ENCODE measurements at regions of chr11 and their contacts with region 1.

Region 1: DNA sequence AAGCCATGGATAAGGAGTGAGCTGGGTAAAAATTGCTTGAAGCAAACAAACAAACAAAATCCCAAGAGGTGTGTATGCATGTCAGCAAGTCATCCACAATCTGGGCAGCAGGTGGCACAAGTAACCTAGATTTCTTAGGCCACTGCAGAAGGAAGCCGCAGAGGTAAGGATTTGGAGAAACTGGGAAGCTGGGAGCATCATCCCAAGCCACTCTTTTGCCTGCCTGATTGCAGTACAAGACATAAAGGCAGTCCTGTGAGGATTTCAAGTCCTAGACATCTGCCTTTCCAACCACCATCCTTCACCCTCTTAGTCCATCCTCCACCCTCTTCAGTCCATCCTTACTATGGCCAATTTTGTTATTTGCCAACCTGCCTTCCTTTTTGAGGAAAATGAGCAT is 67.2 kb upstream of the BMAL1 start:
- DNase-seq: no peak
- H3K4me3 Mint-ChIP-seq: no peak overlapping the region
- H3K27ac Mint-ChIP-seq: no peak overlapping the region
- H3K4me1 Mint-ChIP-seq: peaks cover 25% of the 10 kb centered on the region
- H3K27me3 Mint-ChIP-seq: no peaks in the 10 kb centered on the region

Region 2: GRCh38 chr11:12303421-12304149 is 906.8 kb before region 1 on chr11:
- intact Hi-C with region 1: no loop called
- DNase-seq: no peak
- H3K4me3 Mint-ChIP-seq: no peak overlapping the region
- H3K27ac Mint-ChIP-seq: peak overlapping the region; percentile 57
- H3K4me1 Mint-ChIP-seq: no peaks in the 10 kb centered on the region
- H3K27me3 Mint-ChIP-seq: no peaks in the 10 kb centered on the region

Region 3: GRCh38 chr11:13076966-13077365 is 133.5 kb before region 1 on chr11:
- intact Hi-C with region 1: no loop called
- DNase-seq: no peak
- H3K4me3 Mint-ChIP-seq: no peak overlapping the region
- H3K27ac Mint-ChIP-seq: no peak overlapping the region
- H3K4me1 Mint-ChIP-seq: no peaks in the 10 kb centered on the region
- H3K27me3 Mint-ChIP-seq: peaks cover 9% of the 10 kb centered on the region

Region 4: DNA sequence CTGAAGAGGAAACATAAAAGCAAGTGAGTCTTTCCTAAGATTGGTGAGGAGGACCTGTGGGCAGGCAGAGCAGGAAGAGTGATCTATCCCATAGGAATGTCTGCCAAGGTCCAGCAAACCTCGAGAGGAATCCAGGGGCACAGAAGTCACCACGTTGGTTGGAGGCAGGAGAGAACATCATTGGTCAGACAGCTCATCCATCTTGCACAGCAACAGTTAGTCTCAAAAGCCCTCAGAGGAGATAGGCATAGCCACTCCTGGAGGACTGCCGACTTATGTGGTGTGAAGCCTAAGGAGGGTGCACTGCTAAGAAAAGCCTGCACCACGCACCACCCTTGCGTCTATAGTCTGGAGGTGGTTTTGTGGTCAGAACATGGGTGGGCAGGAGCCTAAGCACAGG is 92.2 kb before region 1 on chr11:
- intact Hi-C with region 1: no loop called
- DNase-seq: no peak
- H3K4me3 Mint-ChIP-seq: no peak overlapping the region
- H3K27ac Mint-ChIP-seq: no peak overlapping the region
- H3K4me1 Mint-ChIP-seq: no peaks in the 10 kb centered on the region
- H3K27me3 Mint-ChIP-seq: peaks cover 4% of the 10 kb centered on the region

Region 5: GRCh38 chr11:13183094-13183825 is 27.2 kb before region 1 on chr11:
- intact Hi-C with region 1: loop called (anchors 1 kb)
- DNase-seq: no peak
- H3K4me3 Mint-ChIP-seq: no peak overlapping the region
- H3K27ac Mint-ChIP-seq: no peak overlapping the region
- H3K4me1 Mint-ChIP-seq: peaks cover 9% of the 10 kb centered on the region
- H3K27me3 Mint-ChIP-seq: peaks cover 9% of the 10 kb centered on the region

Region 6: GRCh38 chr11:13276832-13277767 is 66.7 kb after region 1 on chr11:
- intact Hi-C with region 1: loop called (anchors 1 kb)
- DNase-seq: peak; percentile 98
- H3K4me3 Mint-ChIP-seq: peak overlapping the region; percentile 98
- H3K27ac Mint-ChIP-seq: peak overlapping the region; percentile 80
- H3K4me1 Mint-ChIP-seq: peaks cover 52% of the 10 kb centered on the region
- H3K27me3 Mint-ChIP-seq: peaks cover 46% of the 10 kb centered on the region

Region 7: DNA sequence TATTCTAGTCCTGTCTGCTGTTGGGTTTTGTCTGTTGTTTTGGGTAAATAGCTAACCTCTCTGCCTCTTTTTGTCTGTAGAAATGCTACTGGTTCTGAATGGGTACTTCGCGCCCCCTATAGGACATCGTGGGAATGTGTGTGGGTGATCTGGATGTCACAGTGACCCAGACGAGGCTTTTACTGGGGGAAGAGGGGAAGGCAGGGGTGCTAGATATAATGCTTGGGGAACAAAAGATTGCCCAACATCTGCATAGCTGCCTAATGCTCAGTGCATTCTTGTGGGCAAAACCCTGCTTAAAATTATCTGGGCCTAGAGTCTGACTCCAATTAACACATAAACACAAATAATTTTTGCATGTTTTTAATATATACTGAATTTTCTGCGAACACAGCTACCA is 124.9 kb after region 1 on chr11:
- intact Hi-C with region 1: loop called (anchors 1 kb)
- DNase-seq: peak; percentile 58
- H3K4me3 Mint-ChIP-seq: no peak overlapping the region
- H3K27ac Mint-ChIP-seq: peak overlapping the region; percentile 25
- H3K4me1 Mint-ChIP-seq: peaks cover 56% of the 10 kb centered on the region
- H3K27me3 Mint-ChIP-seq: no peaks in the 10 kb centered on the region

Region 8: DNA sequence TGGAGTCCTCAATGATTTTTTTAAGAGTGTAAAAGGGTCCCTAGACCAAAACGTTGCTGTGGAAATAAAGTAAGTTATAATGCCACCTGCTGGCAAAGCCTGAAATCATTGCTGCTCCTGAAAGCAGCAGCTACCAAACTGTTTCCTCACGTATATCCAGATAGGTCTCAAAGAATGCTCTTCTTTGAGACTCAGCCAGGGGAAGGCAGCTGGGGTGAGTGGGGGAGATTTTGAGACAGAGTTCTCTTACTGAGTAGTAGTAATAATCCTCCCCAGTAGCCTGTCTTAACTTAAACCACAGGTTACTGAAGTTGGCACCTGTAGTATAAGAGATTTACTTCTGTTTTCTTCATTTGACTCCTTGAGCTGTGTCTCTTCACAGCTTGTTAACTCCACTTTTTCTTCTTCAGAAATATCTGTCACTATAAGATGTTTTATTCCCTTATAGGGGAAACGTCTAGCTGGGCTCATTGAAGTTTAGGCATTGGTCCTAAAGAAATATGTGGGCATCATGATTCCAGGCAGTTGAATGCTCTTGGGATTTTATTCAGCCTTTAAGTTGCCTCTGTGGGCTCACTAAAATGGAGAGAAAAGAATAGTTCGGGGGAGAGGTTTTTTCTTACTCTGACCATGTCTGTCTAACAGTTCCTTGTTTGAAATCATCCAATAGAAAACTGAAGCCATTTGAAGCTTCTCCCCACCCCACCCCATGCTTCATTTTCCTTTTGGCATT is 174.7 kb after region 1 on chr11:
- intact Hi-C with region 1: loop called (anchors 2 kb)
- DNase-seq: no peak
- H3K4me3 Mint-ChIP-seq: no peak overlapping the region
- H3K27ac Mint-ChIP-seq: no peak overlapping the region
- H3K4me1 Mint-ChIP-seq: no peaks in the 10 kb centered on the region
- H3K27me3 Mint-ChIP-seq: no peaks in the 10 kb centered on the region

Region 9: GRCh38 chr11:13440100-13440855 is 229.9 kb after region 1 on chr11:
- intact Hi-C with region 1: no loop called
- DNase-seq: no peak
- H3K4me3 Mint-ChIP-seq: no peak overlapping the region
- H3K27ac Mint-ChIP-seq: no peak overlapping the region
- H3K4me1 Mint-ChIP-seq: no peaks in the 10 kb centered on the region
- H3K27me3 Mint-ChIP-seq: no peaks in the 10 kb centered on the region

Region 10: DNA sequence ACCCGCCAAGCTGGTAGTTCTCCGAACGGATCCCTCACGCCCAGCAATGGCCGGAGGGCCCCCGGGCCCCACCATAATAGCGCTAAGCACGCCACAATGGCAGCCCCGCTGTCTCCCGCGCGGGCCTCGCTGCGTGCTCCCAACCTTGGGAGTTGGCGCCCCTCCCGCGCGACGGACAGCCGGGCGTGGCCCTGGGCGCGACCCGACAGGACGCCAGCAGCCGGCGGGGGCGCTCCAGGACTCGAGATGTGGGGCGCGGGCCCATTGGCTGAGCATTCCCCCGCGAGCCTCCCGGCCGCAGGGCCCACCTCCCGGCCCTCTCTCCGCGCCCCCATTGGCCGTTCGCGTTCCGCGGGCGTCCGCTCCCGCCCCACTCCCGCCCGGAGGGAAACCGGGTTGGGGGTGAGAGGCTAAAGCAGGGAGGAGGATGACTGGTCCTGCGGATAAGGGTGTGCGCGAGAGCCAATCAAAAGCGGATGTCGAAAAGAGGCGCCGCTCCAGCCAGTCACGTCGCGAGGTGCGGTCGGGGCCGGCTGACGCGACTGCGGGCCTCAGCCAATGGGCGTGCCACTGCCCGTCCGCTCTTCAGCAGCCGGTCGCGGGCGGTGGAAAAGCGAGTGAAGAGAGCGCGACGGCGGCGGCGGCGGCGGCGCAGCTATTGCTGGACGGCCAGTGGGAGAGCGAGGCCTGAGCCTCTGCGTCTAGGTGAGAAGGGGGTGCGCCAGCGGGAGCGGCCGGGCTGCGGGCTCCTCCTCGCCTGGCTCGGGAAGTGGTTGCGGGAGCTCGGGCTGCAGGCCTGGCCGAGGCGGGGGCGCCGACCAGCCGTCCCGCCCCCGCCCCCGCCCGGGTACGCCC is 457.9 kb after region 1 on chr11 and contains the start of gene FAR1:
- intact Hi-C with region 1: loop called (anchors 1 kb)
- DNase-seq: peak; percentile 97
- H3K4me3 Mint-ChIP-seq: peak within 1 kb of the TSS; percentile 98
- H3K27ac Mint-ChIP-seq: peak within 1 kb of the TSS; percentile 99
- H3K4me1 Mint-ChIP-seq: peaks cover 42% of the 10 kb centered on the region
- H3K27me3 Mint-ChIP-seq: peaks cover 17% of the 10 kb centered on the region
- total RNA-seq, gene FAR1: 67.3 and 67.4 TPM in 2 replicates

Measured in activated T-helper 1 cell treated with anti-CD3 and anti-CD28 coated beads, Interleukin-12 subunit alpha, Interleukin-12 subunit beta, Interleukin-2, Interleukin-4 antibody, amounts not matched to agents 30 ng/mL and 10 ng/mL and 1 ng/mL, durations not matched to agents 14 hours and 24 hours and 36 hours (primary cell).